ENCODE measurements at regions of chr17 and their contacts with region 1.

Region 1: DNA sequence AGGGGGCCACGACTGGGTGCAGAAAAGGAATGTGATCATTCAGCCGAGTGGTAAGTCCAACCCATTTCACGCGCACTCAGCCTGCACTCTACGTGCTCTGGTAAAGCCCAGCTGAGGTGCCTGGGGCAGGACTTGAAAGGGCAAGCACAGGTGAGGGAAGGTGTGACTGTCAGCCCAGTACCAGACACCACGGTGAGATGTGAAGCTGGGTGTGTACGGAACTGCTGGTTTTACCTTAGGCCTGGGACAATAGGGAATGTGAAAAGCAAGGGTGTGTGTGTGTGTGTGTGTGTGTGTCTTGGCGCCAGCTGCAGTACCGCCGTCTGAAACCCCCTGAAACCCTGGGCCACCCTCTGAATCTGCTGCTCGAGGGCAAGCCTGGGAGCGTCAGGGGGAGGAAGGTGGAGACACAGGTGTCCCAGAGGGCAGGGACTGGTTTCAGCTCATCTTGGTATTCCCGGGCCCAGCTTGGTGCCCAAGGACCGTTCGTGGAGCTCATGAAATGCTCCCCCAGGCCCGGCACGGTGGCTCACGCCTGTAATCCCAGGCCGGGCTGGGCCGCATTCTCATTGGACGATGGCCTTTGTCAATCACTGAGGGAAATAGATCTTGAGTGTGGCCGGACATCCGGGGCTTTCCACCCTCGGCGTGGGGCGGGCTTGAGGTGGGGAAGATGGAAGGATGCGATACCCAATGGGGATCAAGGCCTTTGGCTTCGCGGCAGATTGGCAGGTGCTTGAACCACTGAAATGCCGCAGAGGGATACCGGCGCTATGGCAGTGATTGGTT is 27.8 kb upstream of the ST6GALNAC1 start:
- DNase-seq: peak; percentile 99
- H3K4me3 Mint-ChIP-seq: peak overlapping the region; percentile 93
- H3K27ac Mint-ChIP-seq: peak overlapping the region; percentile 90
- H3K4me1 Mint-ChIP-seq: peaks cover 30% of the 10 kb centered on the region
- H3K27me3 Mint-ChIP-seq: peaks cover 10% of the 10 kb centered on the region

Region 2: DNA sequence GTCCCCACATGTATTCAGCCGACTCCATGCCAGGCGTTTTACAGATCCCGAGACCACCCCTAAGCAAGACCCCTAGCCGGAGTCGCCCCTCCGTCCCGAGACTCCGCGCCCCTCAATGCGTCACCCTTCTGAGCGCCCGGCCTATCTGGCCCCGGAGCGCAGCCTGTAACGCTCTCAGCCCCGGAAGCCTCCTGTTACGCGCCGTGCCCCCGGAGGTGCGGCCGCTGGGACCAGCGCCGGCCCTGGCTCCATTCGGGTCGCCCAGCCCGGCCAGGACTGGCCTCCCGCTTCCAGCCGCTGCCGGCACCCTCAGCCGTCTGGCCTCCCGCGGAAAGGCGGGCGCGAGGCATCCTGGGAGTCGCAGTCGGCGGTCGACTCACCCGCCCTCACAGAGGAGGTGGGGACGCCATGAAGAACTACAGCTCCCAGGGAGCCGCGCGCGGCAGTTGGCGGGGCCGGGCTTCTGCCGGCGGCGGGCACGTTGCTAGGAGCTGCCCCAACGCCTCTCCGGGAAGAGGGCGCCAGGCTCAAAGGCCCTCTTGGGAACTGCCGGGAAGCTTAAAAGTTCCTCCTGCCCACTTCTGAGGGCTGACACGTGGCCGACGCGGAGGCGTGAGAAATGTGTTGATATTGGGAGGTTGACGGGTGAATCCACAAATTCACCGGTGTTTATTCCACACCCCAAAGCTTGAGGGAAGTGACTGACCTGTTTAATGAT is 730.4 kb before region 1 on chr17 and contains the start of gene FBF1:
- intact Hi-C with region 1: loop called (anchors 1 kb)
- DNase-seq: peak; percentile 88
- H3K4me3 Mint-ChIP-seq: peak within 1 kb of the TSS; percentile 88
- H3K27ac Mint-ChIP-seq: peak within 1 kb of the TSS; percentile 50
- H3K4me1 Mint-ChIP-seq: peaks cover 13% of the 10 kb centered on the region
- H3K27me3 Mint-ChIP-seq: no peaks in the 10 kb centered on the region
- total RNA-seq, gene FBF1: 19.4 and 20.0 TPM in 2 replicates

Region 3: DNA sequence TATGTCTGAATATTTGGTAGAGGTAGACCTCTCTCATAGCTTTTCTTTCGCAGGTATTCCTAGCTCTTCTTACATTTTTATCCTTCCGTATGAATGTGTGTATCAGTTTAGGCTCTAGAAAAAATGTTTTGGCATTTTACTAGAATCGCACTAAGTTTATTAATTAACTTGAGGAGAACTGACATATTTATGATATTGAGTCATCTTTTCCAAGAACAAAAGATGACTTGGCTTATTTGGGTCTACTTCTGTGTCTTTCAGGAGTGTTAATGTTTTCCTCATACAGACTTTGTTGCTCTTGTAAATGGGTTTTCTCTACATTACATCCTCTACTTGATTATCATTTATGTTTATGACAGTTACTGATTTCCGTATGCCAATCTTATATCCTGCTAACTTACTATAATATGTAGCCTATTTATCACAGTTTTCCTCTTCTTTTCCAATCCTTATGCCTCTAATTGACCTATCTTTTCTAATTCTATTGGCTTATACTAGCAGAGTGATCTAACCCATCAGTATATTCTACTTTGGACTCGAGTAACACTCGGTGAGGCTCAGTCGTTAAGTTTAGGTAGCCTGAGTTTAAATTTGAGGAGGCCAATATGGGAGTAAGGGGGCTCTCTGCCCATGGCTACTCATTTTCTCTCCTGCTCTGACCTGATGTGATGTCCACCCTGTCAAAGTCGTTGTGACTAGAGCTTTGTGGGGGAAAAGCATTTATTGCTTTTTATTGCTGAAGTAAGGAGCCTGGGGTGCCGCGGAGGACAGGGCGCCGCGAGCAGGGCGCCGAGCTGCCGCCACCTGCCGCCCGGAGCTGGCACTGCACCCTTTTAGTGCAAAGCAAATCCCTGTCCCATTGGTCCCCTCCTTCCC is 47.8 kb before region 1 on chr17:
- intact Hi-C with region 1: no loop called
- DNase-seq: peak; percentile 59
- H3K4me3 Mint-ChIP-seq: no peak overlapping the region
- H3K27ac Mint-ChIP-seq: no peak overlapping the region
- H3K4me1 Mint-ChIP-seq: peaks cover 7% of the 10 kb centered on the region
- H3K27me3 Mint-ChIP-seq: peaks cover 12% of the 10 kb centered on the region

Region 4: GRCh38 chr17:76654408-76654807 is 16.9 kb before region 1 on chr17:
- intact Hi-C with region 1: no loop called
- DNase-seq: no peak
- H3K4me3 Mint-ChIP-seq: no peak overlapping the region
- H3K27ac Mint-ChIP-seq: no peak overlapping the region
- H3K4me1 Mint-ChIP-seq: peaks cover 12% of the 10 kb centered on the region
- H3K27me3 Mint-ChIP-seq: peaks cover 4% of the 10 kb centered on the region

Region 5: GRCh38 chr17:76681222-76682137 is 10.2 kb after region 1 on chr17:
- intact Hi-C with region 1: loop called (anchors 1 kb)
- DNase-seq: peak; percentile 48
- H3K4me3 Mint-ChIP-seq: no peak overlapping the region
- H3K27ac Mint-ChIP-seq: no peak overlapping the region
- H3K4me1 Mint-ChIP-seq: no peaks in the 10 kb centered on the region
- H3K27me3 Mint-ChIP-seq: peaks cover 8% of the 10 kb centered on the region